Ascending aorta (tissue), 2 donors: ENCODE measurements at regions of chr1 and their contacts with region 1.

Region 1: GRCh38 chr1:167553136-167554027 is at the start of gene CREG1:
- DNase-seq: peak; percentile 76 to 96
- H3K4me3 ChIP-seq: peak within 1 kb of the TSS; percentile 77 to 85
- H3K27ac ChIP-seq: peak within 1 kb of the TSS; percentile 74 to 80
- H3K4me1 ChIP-seq: peaks cover 0 to 7% of the 10 kb centered on the region in 2 donors
- H3K27me3 ChIP-seq: no peaks in the 10 kb centered on the region
- CTCF ChIP-seq: no peak
- total RNA-seq, gene CREG1: 170 TPM

Region 2: GRCh38 chr1:166875734-166876539 is 677.4 kb before region 1 on chr1 and contains the start of gene TADA1:
- intact Hi-C with region 1: loop called (anchors 1 kb)
- DNase-seq: peak; percentile 93 to 99
- H3K4me3 ChIP-seq: peak within 1 kb of the TSS; percentile 78 to 82
- H3K27ac ChIP-seq: peak within 1 kb of the TSS; percentile 84 to 88
- H3K4me1 ChIP-seq: peaks cover 5 to 7% of the 10 kb centered on the region in 2 donors
- H3K27me3 ChIP-seq: no peaks in the 10 kb centered on the region
- CTCF ChIP-seq: peak in 1 of 3 experiments; percentile 24
- total RNA-seq, gene TADA1: 12.8 TPM

Region 3: DNA sequence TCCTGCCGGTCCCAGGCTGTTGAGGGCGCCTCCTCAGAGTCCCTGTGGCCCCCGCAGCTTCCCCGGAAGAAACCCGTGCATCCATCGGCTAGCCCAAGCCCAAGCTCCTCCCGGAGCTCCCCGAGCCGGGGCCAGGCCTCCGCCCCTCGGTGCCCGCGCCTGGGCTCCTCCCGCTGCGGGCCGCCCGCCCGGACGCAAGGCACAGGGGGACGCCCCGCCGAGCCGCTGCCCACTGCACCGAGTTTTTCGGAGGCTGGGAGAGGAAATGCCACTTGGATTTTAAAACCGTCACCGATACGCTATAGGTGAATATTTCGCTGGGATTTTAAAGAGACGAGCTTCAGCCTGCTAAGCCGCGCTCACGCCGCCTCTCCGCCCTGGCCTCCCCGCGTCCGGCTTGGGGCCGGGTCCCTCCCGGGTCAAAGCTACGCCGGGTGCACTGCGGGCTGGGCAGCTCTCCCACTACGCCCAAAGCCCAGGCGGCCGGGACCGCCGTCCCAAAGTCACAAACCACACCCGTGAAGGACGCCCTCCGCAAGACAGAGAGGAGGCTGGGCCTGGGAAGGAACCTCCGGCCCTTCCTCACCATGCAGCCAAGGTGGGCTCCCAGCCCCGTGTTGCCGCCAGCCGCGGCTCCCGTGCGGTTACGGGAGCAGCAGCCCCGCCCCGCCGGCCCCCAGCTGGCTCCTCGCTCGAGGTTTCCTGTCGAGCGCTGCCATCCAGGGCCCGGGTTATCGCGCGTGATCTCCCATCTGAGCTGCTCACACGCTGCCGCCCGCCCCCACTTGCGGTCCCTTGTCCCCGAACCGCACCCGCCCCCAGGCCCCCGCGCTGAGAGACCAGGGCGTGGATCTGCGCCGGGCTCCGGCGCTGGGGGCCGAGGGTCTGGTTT is 98.2 kb before region 1 on chr1:
- intact Hi-C with region 1: loop called (anchors 5 kb)
- DNase-seq: peak in 1 of 2 donors; percentile 84
- H3K4me3 ChIP-seq: peak overlapping the region; percentile 82 to 96
- H3K27ac ChIP-seq: peak overlapping the region; percentile 88 to 91
- H3K4me1 ChIP-seq: peaks cover 0 to 4% of the 10 kb centered on the region in 2 donors
- H3K27me3 ChIP-seq: no peaks in the 10 kb centered on the region
- CTCF ChIP-seq: no peak

Region 4: DNA sequence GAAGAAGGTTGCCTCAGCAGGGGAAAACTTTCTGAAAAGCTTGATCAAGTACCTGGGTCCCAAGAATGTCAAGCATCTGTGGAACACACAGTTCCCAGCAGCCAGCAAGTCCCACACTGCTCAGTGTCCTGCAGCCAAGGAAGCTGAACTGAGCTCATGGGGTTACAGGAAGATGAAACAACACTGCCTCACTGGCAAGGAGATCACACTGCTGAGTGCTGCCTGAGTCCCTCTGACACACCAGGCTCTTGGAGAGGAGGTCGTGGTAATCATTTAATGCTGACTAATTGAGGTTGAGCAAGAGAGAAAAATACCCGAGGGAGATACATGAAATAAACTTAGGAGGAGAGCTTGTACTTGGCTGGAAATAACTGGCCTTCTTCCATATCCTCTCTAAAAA is 243.6 kb after region 1 on chr1:
- intact Hi-C with region 1: loop called (anchors 5 kb)
- DNase-seq: peak; percentile 68 to 95
- H3K4me3 ChIP-seq: peak overlapping the region; percentile 9 to 24
- H3K27ac ChIP-seq: peak overlapping the region; percentile 71 to 77
- H3K4me1 ChIP-seq: peaks cover 0 to 22% of the 10 kb centered on the region in 2 donors
- H3K27me3 ChIP-seq: no peaks in the 10 kb centered on the region
- CTCF ChIP-seq: no peak